Activated T-helper 2 cell treated with anti-CD3 and anti-CD28 coated beads, Interferon-gamma antibody, Interleukin-2, Interleukin-4, amounts not matched to agents 10 μg/mL and 5 μg/mL and 100 μg/mL, durations not matched to agents 14 hours and 24 hours and 36 hours (primary cell): ENCODE measurements at regions of chr1 and their contacts with region 1.

Region 1: GRCh38 chr1:230972855-230973271 is 5.8 kb downstream of the TTC13 start:
- DNase-seq: peak; percentile 65
- H3K4me3 Mint-ChIP-seq: peak overlapping the region; percentile 54
- H3K27ac Mint-ChIP-seq: peak overlapping the region; percentile 70
- H3K4me1 Mint-ChIP-seq: peaks cover 55% of the 10 kb centered on the region
- H3K27me3 Mint-ChIP-seq: no peaks in the 10 kb centered on the region

Region 2: DNA sequence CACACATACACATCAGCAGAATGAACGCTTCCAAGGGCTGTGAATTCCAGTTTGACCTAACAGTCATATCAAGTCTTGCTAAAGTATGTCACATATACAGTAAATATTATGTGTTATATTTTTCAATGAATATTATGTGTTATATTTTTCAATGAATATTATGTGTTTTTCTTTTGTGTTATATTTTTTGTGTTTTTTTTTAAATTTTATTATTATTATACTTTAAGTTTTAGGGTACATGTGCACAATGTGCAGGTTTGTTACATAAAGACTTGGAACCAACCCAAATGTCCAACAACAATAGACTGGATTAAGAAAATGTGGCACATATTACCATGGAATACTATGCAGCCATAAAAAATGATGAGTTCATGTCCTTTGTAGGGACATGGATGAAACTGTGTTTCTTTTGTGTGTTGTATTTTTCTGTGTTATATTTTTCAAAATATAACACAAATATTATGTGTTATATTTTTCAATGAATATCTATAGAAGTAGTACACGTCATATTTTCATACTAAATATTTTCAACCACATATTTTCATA is 29.7 kb before region 1 on chr1:
- intact Hi-C with region 1: loop called (anchors 2 kb)
- DNase-seq: no peak
- H3K4me3 Mint-ChIP-seq: no peak overlapping the region
- H3K27ac Mint-ChIP-seq: no peak overlapping the region
- H3K4me1 Mint-ChIP-seq: peaks cover 13% of the 10 kb centered on the region
- H3K27me3 Mint-ChIP-seq: no peaks in the 10 kb centered on the region

Region 3: GRCh38 chr1:231016234-231016633 is 43.4 kb after region 1 on chr1:
- intact Hi-C with region 1: no loop called
- DNase-seq: no peak
- H3K4me3 Mint-ChIP-seq: no peak overlapping the region
- H3K27ac Mint-ChIP-seq: no peak overlapping the region
- H3K4me1 Mint-ChIP-seq: peaks cover 11% of the 10 kb centered on the region
- H3K27me3 Mint-ChIP-seq: no peaks in the 10 kb centered on the region

Region 4: GRCh38 chr1:231106347-231106746 is 133.5 kb after region 1 on chr1:
- intact Hi-C with region 1: no loop called
- DNase-seq: no peak
- H3K4me3 Mint-ChIP-seq: no peak overlapping the region
- H3K27ac Mint-ChIP-seq: no peak overlapping the region
- H3K4me1 Mint-ChIP-seq: peaks cover 7% of the 10 kb centered on the region
- H3K27me3 Mint-ChIP-seq: peaks cover 19% of the 10 kb centered on the region

Region 5: DNA sequence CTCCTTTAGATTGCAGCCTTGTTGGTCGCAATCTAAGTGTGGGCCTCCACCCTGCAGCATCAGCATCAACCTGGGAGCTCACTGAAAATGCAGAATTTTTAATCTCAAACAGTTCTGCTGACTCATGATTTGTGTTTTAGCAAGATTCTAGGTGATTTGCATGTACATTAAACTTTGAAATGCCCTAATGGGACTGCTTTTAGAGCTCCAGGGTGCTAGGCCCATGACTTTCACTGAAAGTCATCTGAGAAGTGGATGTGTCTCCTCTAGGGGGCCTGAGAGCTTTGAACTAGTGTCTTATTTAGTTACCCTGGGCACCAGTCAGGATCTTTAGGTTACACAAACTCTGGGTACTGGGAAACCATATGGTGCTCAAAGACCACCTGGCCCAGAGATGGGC is 198.0 kb after region 1 on chr1:
- intact Hi-C with region 1: no loop called
- DNase-seq: no peak
- H3K4me3 Mint-ChIP-seq: no peak overlapping the region
- H3K27ac Mint-ChIP-seq: no peak overlapping the region
- H3K4me1 Mint-ChIP-seq: no peaks in the 10 kb centered on the region
- H3K27me3 Mint-ChIP-seq: peaks cover 37% of the 10 kb centered on the region